WTC11 (cell line): ENCODE measurements at regions of chr1 and their contacts with region 1.

Region 1: DNA sequence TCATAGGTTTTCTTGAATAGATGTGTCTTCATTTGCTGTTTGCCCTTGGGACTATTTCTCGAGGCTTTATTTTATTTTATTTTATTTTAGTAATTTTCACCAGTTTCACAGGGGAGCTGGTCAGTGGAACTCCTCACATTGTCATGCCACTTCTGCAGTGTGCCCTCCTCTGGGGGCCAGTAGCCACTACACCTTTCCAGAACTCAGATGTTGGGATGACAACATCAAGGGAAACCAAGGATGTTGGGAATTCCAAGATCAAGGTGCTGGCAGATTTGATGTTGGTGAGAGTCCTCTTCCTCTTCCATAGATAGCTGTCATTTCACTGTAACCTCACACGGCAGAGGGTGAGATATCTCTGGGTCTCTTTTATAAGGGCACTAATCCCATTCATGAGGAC is 35.5 kb downstream of the SLC26A9 start:
- DNase-seq: peak; percentile 57
- ATAC-seq: peak; percentile 92
- H3K4me3 Mint-ChIP-seq: no peak overlapping the region
- H3K27ac Mint-ChIP-seq: no peak overlapping the region
- H3K4me1 Mint-ChIP-seq: peaks cover 3% of the 10 kb centered on the region
- H3K27me3 Mint-ChIP-seq: no peaks in the 10 kb centered on the region; the same call in none of the 2 replicates
- CTCF ChIP-seq: peak; percentile 28; the same call in 1 of the 2 replicates

Region 2: GRCh38 chr1:205812271-205812877 is 95.4 kb before region 1 on chr1:
- CTCF ChIA-PET with region 1: interaction called, 17 read pairs
- POLR2A ChIA-PET with region 1: no interaction called
- DNase-seq: peak; percentile 43
- ATAC-seq: peak; percentile 31
- H3K4me3 Mint-ChIP-seq: peak overlapping the region; percentile 90
- H3K27ac Mint-ChIP-seq: peak overlapping the region; percentile 10
- H3K4me1 Mint-ChIP-seq: peaks cover 37% of the 10 kb centered on the region
- H3K27me3 Mint-ChIP-seq: peaks cover 16% of the 10 kb centered on the region; the same call in 1 of the 2 replicates
- CTCF ChIP-seq: no peak

Region 3: GRCh38 chr1:205925730-205926129 is 17.9 kb after region 1 on chr1:
- CTCF ChIA-PET with region 1: no interaction called
- POLR2A ChIA-PET with region 1: no interaction called
- DNase-seq: no peak
- ATAC-seq: no peak
- H3K4me3 Mint-ChIP-seq: no peak overlapping the region
- H3K27ac Mint-ChIP-seq: no peak overlapping the region
- H3K4me1 Mint-ChIP-seq: peaks cover 6% of the 10 kb centered on the region; the same call in 1 of the 2 replicates
- H3K27me3 Mint-ChIP-seq: no peaks in the 10 kb centered on the region
- CTCF ChIP-seq: no peak